Heart left ventricle (tissue), 16 donors: ENCODE measurements at regions of chr4 and their contacts with region 1.

Region 1: DNA sequence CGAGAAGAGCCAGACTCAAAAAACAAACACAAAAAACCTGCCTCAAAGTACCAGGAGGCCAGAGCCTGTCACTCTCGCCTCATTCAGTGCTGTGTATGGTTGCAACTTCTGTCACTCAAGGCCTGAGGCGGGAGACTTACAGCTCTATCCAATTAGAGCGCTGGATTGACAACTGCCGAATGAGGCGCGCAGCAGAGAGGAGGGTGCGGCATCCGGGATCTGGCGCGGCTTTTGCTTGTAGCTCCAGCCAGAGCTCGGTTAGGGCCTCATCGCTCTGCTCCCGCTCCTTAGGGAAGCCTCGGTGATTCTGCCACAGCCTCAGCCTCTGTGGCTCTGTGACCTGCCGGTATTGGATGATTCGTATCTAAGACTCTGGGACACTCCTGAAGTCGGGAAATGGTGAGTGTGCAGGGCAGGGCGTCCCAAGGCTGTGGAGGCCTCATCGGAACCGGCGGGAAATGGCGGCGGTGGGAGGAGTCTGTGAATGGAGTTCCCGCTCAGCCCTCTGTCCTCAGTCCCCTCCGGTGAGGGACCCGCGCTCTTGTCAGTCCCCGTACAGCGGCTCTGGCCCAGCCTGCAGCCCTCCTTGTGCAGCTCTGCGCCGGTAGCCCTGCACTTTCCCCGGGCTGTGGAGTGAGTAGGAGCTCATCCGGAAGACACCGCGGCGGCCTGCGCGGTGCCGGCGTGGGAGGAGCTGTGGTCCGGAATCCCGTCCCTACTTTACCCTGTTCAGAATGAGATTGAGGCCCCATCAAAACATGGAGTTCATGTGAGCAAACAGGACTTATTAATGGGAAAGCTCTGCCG is at the start of gene ZNF718:
- DNase-seq: peak; percentile 94 to 96 (median 95)
- ATAC-seq: peak; percentile 100
- H3K4me3 ChIP-seq: peak within 1 kb of the TSS; percentile 45 to 97 (median 82)
- H3K27ac ChIP-seq: peak within 1 kb of the TSS; percentile 77 to 96 (median 90)
- H3K4me1 ChIP-seq: peaks cover 0 to 15% (median 12%) of the 10 kb centered on the region in 12 donors
- H3K27me3 ChIP-seq: no peaks in the 10 kb centered on the region
- CTCF ChIP-seq: no peak
- POLR2A ChIP-seq: peak in 1 of 2 donors; percentile 70
- total RNA-seq, gene ZNF718: 2.4 to 6.5 (median 3.3) TPM

Region 2: GRCh38 chr4:212438-213188 is 88.1 kb after region 1 on chr4:
- intact Hi-C with region 1: loop called in 1 of 10 experiments (anchors 5 kb)
- DNase-seq: peak; percentile 83 to 88 (median 83)
- ATAC-seq: peak; percentile 98 to 100 (median 100)
- H3K4me3 ChIP-seq: peak overlapping the region; percentile 57 to 93 (median 75)
- H3K27ac ChIP-seq: peak overlapping the region in 11 of 12 donors; percentile 7 to 83 (median 64)
- H3K4me1 ChIP-seq: peaks cover 0 to 13% (median 5%) of the 10 kb centered on the region in 12 donors
- H3K27me3 ChIP-seq: no peaks in the 10 kb centered on the region
- CTCF ChIP-seq: peak in 1 of 12 donors; percentile 8
- POLR2A ChIP-seq: peak in 1 of 2 donors; percentile 48